ENCODE measurements at regions of chr9 and their contacts with region 1.

Region 1: DNA sequence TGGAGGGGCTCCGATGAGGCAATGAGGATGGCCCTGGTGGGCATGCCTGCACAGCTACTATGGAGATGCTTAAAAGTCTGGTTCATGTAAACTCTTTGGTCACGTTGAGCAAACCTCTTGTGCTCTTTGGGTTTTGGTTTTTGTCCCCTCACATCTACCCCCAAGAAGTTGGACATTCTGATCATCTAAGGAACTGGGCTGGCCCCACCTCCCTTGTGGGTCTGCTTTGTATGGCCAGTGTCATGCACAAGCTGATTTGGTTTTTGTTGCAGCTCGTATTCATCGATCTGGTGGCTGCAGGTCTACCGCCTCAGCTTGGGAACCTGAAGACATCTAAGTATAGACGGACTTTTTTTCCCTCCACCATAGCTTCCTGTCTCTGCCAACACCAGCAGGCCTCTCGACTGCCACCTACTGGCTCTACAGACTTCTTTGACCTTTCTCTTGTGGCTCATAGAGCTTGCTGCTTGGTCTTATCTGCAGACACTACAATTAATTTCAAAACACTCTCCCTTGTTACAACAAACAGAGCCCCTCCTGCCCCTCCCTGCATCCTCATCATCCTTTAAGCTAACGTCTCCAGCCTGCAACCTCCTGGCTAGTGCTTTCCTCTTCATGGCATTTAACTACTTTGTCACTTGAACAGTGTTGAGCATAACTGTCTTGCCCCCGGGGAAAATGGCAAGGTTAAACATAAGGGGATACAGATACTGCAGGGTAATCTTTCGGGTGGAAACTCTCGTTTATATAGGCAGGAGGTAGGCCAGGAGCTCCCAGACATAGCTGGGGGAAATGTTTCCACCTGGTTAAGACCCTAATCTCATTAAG is 34.5 kb downstream of the TSTD2 start:
- DNase-seq: peak; percentile 61
- ATAC-seq: peak; percentile 98
- H3K4me3 ChIP-seq: 0 out of 2 replicates have a peak overlapping the region, but pooled peaks have one; percentile 15
- H3K27ac ChIP-seq: no peak overlapping the region
- H3K4me1 ChIP-seq: peaks cover 7% of the 10 kb centered on the region; the same call in 1 of the 2 replicates
- H3K27me3 ChIP-seq: no peaks in the 10 kb centered on the region
- CTCF ChIP-seq: peak; percentile 77 to 94 (median 88)
- EP300 ChIP-seq: no peak
- POLR2A ChIP-seq: no peak
- RAD21 ChIP-seq: peak; percentile 86

Region 2: DNA sequence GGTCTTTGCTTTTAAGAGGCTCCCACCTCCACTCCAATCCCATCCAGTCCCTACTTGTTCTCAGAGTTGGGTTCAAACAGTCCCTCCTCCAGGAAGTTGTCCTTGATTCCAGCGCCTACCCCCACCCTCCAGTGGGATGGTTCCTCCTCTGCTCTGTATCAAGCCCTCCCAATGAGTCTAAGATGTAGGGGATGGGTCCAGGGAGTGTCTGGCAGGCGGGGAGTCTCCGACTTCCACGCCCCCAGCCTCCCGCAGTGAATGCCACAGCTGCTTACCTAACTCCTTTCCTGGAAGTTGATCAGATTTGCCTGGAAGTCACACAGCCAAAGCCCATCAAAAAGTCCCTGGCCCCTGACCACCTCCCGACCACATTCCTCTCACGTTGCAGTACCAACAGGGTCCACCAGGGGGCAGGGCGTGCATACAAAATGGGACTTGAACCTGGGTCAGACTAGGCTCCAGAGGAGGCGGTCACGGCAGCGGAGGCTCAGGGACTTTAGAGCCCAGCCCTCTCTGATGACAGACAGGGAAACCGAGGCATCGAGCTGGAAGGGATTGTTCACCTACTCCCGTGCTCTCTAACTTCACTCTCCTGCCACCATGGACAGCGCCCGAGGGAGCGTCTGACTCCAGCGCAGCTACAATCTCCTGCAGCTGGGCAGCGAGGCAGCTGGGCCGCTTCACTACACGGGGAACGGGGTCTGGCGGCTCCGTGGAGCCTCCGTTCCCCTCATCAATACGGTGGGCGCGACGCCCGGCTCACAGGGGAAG is 211.8 kb before region 1 on chr9:
- CTCF ChIA-PET with region 1: interaction called, 30 read pairs
- POLR2A ChIA-PET with region 1: no interaction called
- RAD21 ChIA-PET with region 1: interaction called, 14 read pairs
- SMC1A ChIA-PET with region 1: interaction called, 18 read pairs
- in situ Hi-C with region 1: no loop called
- intact Hi-C with region 1: no loop called
- DNase-seq: no peak
- ATAC-seq: peak; percentile 44
- H3K4me3 ChIP-seq: no peak overlapping the region
- H3K27ac ChIP-seq: no peak overlapping the region
- H3K4me1 ChIP-seq: peaks cover 43% of the 10 kb centered on the region
- H3K27me3 ChIP-seq: no peaks in the 10 kb centered on the region
- CTCF ChIP-seq: peak; percentile 95 to 100 (median 98)
- EP300 ChIP-seq: no peak
- POLR2A ChIP-seq: no peak
- RAD21 ChIP-seq: peak; percentile 91

Region 3: DNA sequence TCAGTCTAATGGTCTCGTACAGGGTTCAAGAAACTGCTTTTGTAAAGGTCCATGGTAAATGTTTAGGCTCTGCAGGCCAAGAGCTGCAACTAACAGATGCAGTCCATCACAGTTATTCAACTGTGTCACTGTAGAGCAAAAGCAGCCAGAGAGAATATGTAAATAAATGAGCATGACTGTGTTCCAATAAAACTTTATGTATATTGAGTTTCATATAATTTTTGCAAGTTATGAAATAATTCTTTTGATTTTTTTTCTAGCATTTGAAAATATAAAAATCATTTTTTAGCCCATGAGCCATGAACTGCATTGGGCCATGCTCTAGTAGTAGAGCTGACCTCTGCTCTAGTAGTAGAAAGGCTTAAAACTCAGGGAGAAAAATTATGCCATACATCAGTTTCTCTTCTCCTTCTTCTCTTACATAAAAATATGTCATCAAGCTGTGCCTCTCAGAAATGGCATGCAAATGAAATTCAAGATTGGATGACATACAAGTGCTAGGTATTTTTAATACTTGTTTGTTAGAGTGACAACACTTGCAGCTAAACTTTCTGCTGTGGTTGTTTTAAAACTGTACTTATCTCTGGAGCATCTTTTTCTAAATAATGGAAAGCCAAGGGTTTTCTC is 139.5 kb before region 1 on chr9:
- CTCF ChIA-PET with region 1: interaction called, 12 read pairs
- POLR2A ChIA-PET with region 1: interaction called, 8 read pairs
- RAD21 ChIA-PET with region 1: interaction called, 6 read pairs
- SMC1A ChIA-PET with region 1: interaction called, 6 read pairs
- in situ Hi-C with region 1: no loop called
- intact Hi-C with region 1: no loop called
- DNase-seq: no peak
- ATAC-seq: no peak
- H3K4me3 ChIP-seq: no peak overlapping the region
- H3K27ac ChIP-seq: no peak overlapping the region
- H3K4me1 ChIP-seq: no peaks in the 10 kb centered on the region
- H3K27me3 ChIP-seq: no peaks in the 10 kb centered on the region
- CTCF ChIP-seq: no peak
- EP300 ChIP-seq: no peak
- POLR2A ChIP-seq: no peak
- RAD21 ChIP-seq: no peak

Region 4: DNA sequence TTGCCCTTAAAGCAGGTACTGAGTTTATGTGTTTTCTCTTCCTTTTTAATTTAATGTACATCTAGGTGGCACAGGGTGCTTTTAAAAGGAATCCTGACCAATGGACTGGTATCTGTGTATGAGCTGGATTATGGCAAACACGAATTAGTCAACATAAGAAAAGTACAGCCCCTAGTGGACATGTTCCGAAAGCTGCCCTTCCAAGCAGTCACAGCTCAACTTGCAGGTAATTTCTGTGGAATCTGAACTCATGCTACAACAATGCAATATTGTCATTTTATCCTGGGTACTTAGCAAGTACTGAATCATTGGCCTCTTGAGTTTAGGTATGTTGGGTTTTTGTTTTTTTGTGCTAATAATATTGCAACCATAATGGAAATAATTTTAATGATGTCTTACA is 111.6 kb before region 1 on chr9:
- CTCF ChIA-PET with region 1: interaction called, 23 read pairs
- POLR2A ChIA-PET with region 1: no interaction called
- RAD21 ChIA-PET with region 1: interaction called, 5 read pairs
- SMC1A ChIA-PET with region 1: interaction called, 24 read pairs
- in situ Hi-C with region 1: no loop called
- intact Hi-C with region 1: no loop called
- DNase-seq: no peak
- ATAC-seq: peak; percentile 42; the same call in 2 of the 3 replicates
- H3K4me3 ChIP-seq: no peak overlapping the region
- H3K27ac ChIP-seq: no peak overlapping the region
- H3K4me1 ChIP-seq: peaks cover 5% of the 10 kb centered on the region; the same call in 1 of the 2 replicates
- H3K27me3 ChIP-seq: no peaks in the 10 kb centered on the region
- CTCF ChIP-seq: 0 out of 6 replicates have a peak, but pooled peaks of 1 of the 3 experiments have one; percentile 17
- EP300 ChIP-seq: no peak
- POLR2A ChIP-seq: no peak
- RAD21 ChIP-seq: no peak

Region 5: DNA sequence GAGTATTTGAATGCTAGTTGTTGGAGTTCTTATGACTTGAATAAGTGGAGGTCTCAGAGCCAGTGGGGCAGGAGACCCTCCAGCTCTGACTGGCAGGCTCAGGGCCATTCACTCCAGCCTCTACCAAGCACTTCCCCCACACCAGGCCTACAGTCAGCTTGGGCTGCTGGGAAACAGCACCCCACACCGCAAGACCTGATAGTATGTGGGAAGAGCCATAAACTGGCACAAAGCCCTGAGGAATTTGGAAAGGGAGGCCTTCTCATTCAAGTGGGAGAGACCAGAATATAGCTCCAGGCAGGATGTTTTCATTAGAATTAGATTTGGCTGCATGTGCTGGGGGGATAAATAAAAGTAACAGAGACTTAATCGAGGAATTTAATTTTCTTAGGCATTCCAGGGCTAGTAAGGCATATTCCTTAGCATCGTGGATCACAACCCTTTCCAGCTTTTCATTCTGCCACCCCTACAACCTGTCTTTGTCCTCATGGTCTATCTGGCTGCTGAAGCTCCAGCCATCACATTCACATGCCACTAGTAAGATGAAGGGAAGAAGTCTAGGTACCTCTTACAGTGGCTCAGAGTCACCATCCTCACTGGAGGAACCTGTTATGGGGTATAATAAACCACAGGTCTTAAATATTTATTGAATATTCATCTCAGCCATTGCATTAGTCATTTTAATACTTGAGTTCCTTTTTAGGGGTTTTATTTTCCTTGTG is 49.7 kb before region 1 on chr9:
- CTCF ChIA-PET with region 1: interaction called, 10 read pairs
- POLR2A ChIA-PET with region 1: interaction called, 3 read pairs
- RAD21 ChIA-PET with region 1: no interaction called
- SMC1A ChIA-PET with region 1: interaction called, 3 read pairs
- in situ Hi-C with region 1: no loop called
- intact Hi-C with region 1: no loop called
- DNase-seq: no peak
- ATAC-seq: no peak
- H3K4me3 ChIP-seq: no peak overlapping the region
- H3K27ac ChIP-seq: no peak overlapping the region
- H3K4me1 ChIP-seq: no peaks in the 10 kb centered on the region
- H3K27me3 ChIP-seq: no peaks in the 10 kb centered on the region
- CTCF ChIP-seq: no peak
- EP300 ChIP-seq: no peak
- POLR2A ChIP-seq: no peak
- RAD21 ChIP-seq: no peak

Region 6: GRCh38 chr9:97615439-97616072 is 16.9 kb after region 1 on chr9:
- CTCF ChIA-PET with region 1: interaction called, 215 read pairs
- POLR2A ChIA-PET with region 1: no interaction called
- RAD21 ChIA-PET with region 1: interaction called, 28 read pairs
- SMC1A ChIA-PET with region 1: interaction called, 49 read pairs
- in situ Hi-C with region 1: no loop called
- intact Hi-C with region 1: no loop called
- DNase-seq: no peak
- ATAC-seq: peak; percentile 73
- H3K4me3 ChIP-seq: no peak overlapping the region
- H3K27ac ChIP-seq: no peak overlapping the region
- H3K4me1 ChIP-seq: peaks cover 10% of the 10 kb centered on the region; the same call in 1 of the 2 replicates
- H3K27me3 ChIP-seq: no peaks in the 10 kb centered on the region
- CTCF ChIP-seq: peak; percentile 63 to 84 (median 80)
- EP300 ChIP-seq: no peak
- POLR2A ChIP-seq: no peak
- RAD21 ChIP-seq: peak; percentile 86